Panc1 (cell line): ENCODE measurements at regions of chr1 and their contacts with region 1.

Region 1: DNA sequence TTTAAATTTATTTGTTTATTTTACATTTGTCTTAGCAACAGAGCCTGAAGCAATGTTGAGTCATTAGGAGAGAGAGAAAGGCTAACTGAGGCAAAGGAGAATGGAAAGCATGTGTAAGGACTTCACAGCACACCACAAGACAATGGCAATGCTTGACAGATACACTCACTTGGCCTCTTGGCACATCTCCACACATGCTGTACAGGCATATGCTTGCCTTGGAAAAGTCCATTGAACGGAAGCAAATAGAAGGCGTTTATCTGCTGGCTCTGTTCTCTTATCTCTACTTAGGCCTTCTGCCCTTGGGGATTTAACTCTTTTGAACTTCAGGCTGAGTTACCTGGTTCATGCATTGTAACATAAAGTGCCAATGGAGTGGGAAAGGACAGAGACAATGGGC is 262.2 kb upstream of the POU3F1 start:
- DNase-seq: no peak
- ATAC-seq: no peak
- H3K4me3 ChIP-seq: no peak overlapping the region
- H3K27ac ChIP-seq: no peak overlapping the region
- H3K4me1 ChIP-seq: no peaks in the 10 kb centered on the region
- H3K27me3 ChIP-seq: peaks cover 15% of the 10 kb centered on the region; the same call in 1 of the 2 replicates
- CTCF ChIP-seq: no peak

Region 2: DNA sequence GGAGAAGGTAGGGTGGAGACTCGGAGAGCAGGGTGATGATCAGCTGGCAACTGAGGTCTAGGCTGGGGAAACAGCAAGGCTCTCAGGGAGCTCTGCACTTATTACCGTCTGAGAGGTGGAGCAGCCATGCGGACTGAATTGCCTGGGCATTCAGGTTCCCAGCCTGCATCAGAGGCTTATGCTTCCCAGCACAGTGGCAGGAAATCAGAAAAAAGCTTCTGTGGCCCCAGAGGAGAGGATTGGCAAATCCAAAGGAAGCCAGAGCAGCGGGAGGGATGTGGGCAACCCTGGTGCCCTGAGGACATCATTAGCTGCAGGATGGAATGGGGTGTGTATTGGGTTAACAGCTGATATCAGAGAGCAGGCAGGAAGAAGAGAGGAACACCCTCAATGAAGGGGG is 111.9 kb after region 1 on chr1:
- CTCF ChIA-PET with region 1: no interaction called
- POLR2A ChIA-PET with region 1: no interaction called
- in situ Hi-C with region 1: no loop called
- intact Hi-C with region 1: no loop called
- DNase-seq: no peak
- ATAC-seq: no peak
- H3K4me3 ChIP-seq: no peak overlapping the region
- H3K27ac ChIP-seq: no peak overlapping the region
- H3K4me1 ChIP-seq: no peaks in the 10 kb centered on the region
- H3K27me3 ChIP-seq: peaks cover 2% of the 10 kb centered on the region
- CTCF ChIP-seq: no peak

Region 3: GRCh38 chr1:38526046-38526445 is 217.3 kb after region 1 on chr1:
- CTCF ChIA-PET with region 1: interaction called, 10 read pairs
- POLR2A ChIA-PET with region 1: no interaction called
- in situ Hi-C with region 1: no loop called
- intact Hi-C with region 1: no loop called
- DNase-seq: no peak
- ATAC-seq: no peak
- H3K4me3 ChIP-seq: no peak overlapping the region
- H3K27ac ChIP-seq: no peak overlapping the region
- H3K4me1 ChIP-seq: no peaks in the 10 kb centered on the region
- H3K27me3 ChIP-seq: peaks cover 24% of the 10 kb centered on the region
- CTCF ChIP-seq: no peak